ENCODE measurements at regions of chr12 and their contacts with region 1.

Region 1: GRCh38 chr12:54749191-54749818 is 101.1 kb upstream of the DCD start:
- DNase-seq: peak in 9 of 14 experiments; percentile 6 to 83 (median 28)
- ATAC-seq: peak; percentile 71
- H3K4me3 ChIP-seq: no peak overlapping the region
- H3K4me3 Mint-ChIP-seq: no peak overlapping the region
- H3K27ac ChIP-seq: no peak overlapping the region
- H3K27ac Mint-ChIP-seq: no peak overlapping the region
- H3K4me1 ChIP-seq: peaks cover 4% of the 10 kb centered on the region
- H3K4me1 Mint-ChIP-seq: peaks cover 18% of the 10 kb centered on the region
- H3K27me3 ChIP-seq: no peaks in the 10 kb centered on the region
- H3K27me3 Mint-ChIP-seq: no peaks in the 10 kb centered on the region
- CTCF ChIP-seq: peak; percentile 91

Region 2: GRCh38 chr12:54853995-54854566 is 104.8 kb after region 1 on chr12 and contains the start of gene MUCL1:
- CTCF ChIA-PET with region 1: interaction called, 3 read pairs
- POLR2A ChIA-PET with region 1: no interaction called
- intact Hi-C with region 1: loop called (anchors 1 to 5 kb)
- DNase-seq: peak; percentile 46 to 84 (median 64)
- ATAC-seq: peak; percentile 100
- H3K4me3 ChIP-seq: no peak within 1 kb of the TSS
- H3K4me3 Mint-ChIP-seq: no peak within 1 kb of the TSS
- H3K27ac ChIP-seq: no peak within 1 kb of the TSS
- H3K27ac Mint-ChIP-seq: no peak within 1 kb of the TSS
- H3K4me1 ChIP-seq: no peaks in the 10 kb centered on the region
- H3K4me1 Mint-ChIP-seq: no peaks in the 10 kb centered on the region
- H3K27me3 ChIP-seq: no peaks in the 10 kb centered on the region
- H3K27me3 Mint-ChIP-seq: no peaks in the 10 kb centered on the region
- CTCF ChIP-seq: peak; percentile 90
- total RNA-seq, gene MUCL1: not detected

Region 3: DNA sequence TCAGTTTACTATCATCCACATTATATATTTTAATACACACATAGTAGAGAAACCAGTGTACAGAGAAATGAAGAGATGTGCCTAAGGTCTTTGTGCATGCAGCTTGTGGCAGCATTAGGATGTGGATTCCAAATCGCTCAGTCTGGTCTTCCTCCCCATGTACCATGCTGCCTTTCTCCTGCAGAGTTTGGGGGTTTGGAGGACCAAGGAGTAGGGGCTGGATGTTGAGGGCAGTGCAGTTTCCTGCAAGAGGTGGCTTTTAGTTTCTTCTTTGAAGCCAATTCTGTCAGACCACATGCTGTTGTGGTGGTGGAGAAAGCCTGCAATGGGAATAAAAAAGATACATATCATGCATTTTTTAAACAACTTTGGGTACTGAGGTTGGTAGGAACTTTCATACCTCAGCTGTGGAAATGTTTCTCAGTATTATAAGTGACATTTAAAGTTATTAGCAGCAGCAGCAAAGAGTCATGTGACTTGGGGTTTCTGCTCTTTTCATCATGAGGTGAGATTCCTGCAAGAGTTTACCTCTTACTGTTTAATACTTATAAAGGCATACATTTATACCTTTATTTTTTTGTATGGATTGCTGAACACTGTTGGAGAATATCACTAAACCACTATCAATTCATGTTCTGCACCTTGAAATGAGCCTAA is 200.9 kb after region 1 on chr12:
- CTCF ChIA-PET with region 1: no interaction called
- POLR2A ChIA-PET with region 1: no interaction called
- intact Hi-C with region 1: no loop called
- DNase-seq: no peak
- ATAC-seq: no peak
- H3K4me3 ChIP-seq: no peak overlapping the region
- H3K4me3 Mint-ChIP-seq: no peak overlapping the region
- H3K27ac ChIP-seq: no peak overlapping the region
- H3K27ac Mint-ChIP-seq: peak overlapping the region; percentile 86
- H3K4me1 ChIP-seq: peaks cover 2% of the 10 kb centered on the region
- H3K4me1 Mint-ChIP-seq: peaks cover 44% of the 10 kb centered on the region
- H3K27me3 ChIP-seq: no peaks in the 10 kb centered on the region
- H3K27me3 Mint-ChIP-seq: no peaks in the 10 kb centered on the region
- CTCF ChIP-seq: no peak

Region 4: GRCh38 chr12:55142669-55143565 is 393.6 kb after region 1 on chr12:
- CTCF ChIA-PET with region 1: interaction called, 3 read pairs
- POLR2A ChIA-PET with region 1: interaction called, 3 read pairs
- intact Hi-C with region 1: loop called (anchors 1 to 5 kb)
- DNase-seq: peak in 12 of 14 experiments; percentile 12 to 69 (median 29)
- ATAC-seq: no peak
- H3K4me3 ChIP-seq: no peak overlapping the region
- H3K4me3 Mint-ChIP-seq: no peak overlapping the region
- H3K27ac ChIP-seq: no peak overlapping the region
- H3K27ac Mint-ChIP-seq: no peak overlapping the region
- H3K4me1 ChIP-seq: no peaks in the 10 kb centered on the region
- H3K4me1 Mint-ChIP-seq: no peaks in the 10 kb centered on the region
- H3K27me3 ChIP-seq: no peaks in the 10 kb centered on the region
- H3K27me3 Mint-ChIP-seq: peaks cover 4% of the 10 kb centered on the region
- CTCF ChIP-seq: peak; percentile 92